A673 (cell line): ENCODE measurements at regions of chr3 and their contacts with region 1.

Region 1: DNA sequence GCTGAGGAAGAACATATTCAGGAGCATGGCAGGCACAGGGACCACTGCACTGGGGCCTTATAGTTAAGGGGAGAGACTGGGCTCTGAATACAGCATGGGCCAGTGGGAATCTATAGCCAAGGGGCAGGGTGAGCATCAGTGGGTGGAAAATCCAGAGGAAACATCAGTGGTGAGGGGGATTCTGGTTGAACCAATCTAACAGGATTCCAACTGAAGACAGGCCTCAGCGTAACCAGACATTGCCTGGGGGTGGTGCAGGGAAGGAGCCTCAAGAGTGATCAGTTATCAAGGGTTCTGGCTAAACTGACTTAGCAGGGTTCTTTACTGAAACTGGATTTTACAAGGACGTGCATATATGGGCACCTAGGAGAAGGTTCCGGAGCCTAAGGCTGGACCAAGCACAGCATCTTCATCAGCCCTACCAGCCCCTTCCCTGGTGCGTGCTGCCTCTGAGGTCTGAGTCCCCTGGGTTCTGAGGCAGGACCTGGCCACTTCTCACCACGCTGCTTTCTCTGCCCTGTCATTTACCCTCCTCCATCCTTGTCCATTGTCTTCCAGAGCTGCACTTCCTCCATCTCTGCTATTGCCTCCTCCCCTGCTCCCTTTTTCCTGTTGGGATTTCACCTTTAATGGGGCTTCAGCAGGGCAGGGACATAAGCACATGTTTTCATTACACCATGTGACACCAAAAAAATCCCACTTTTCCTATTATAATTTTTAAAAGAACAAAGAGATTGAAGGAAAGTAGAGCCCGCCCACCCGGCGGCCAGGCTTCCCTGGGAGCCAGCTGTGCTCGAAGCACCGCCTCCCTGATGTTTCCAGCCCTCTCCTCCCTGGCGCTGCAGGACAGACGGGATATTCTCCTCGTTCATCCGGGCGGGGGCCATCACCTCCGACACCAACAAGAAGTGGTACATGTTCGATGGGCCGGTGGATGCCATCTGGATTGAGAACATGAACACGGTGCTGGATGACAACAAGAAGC is 52.1 kb downstream of the DNAH1 start:
- DNase-seq: no peak
- H3K4me3 ChIP-seq: no peak overlapping the region
- H3K27ac ChIP-seq: no peak overlapping the region
- H3K4me1 ChIP-seq: no peaks in the 10 kb centered on the region
- H3K27me3 ChIP-seq: no peaks in the 10 kb centered on the region
- CTCF ChIP-seq: no peak

Region 2: DNA sequence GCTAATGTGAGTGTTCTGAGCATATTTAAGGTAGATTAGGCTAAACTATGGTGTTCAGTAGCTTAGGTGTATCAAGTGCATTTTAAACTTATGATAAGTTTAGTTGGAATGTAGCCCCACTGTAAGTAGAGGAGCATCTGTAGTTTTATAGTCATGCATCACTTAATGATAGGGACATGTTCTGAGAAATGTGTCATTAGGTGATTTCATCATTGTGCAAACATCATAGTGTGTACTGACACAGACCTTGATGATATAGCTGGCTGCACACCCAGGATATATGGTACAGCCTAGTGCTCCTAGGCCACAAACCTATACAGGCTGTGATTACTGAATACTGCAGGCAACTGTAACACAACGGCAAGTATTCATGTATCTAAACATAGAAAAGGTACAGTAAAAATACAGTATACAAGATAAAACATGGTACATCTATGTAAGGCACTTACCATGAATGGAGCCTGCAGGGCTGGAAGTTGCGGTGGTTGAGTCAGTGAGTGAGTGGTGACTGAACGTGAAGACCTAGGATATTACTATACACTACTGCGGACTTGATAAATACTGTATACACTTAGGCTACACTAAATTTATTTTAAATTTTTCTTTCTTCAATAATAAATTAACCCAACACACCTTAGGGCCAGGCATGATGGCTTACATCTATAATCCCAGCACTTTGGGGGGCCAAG is 34.2 kb before region 1 on chr3:
- CTCF ChIA-PET with region 1: no interaction called
- POLR2A ChIA-PET with region 1: no interaction called
- intact Hi-C with region 1: loop called (anchors 2 kb)
- DNase-seq: no peak
- H3K4me3 ChIP-seq: no peak overlapping the region
- H3K27ac ChIP-seq: no peak overlapping the region
- H3K4me1 ChIP-seq: no peaks in the 10 kb centered on the region
- H3K27me3 ChIP-seq: no peaks in the 10 kb centered on the region
- CTCF ChIP-seq: no peak